Activated CD4-positive, alpha-beta memory T cell treated with anti-CD3 and anti-CD28 coated beads, Interleukin-2, amount 10 ng/mL, durations not matched to agents 7 days and 5 days (primary cell): ENCODE measurements at regions of chr9 and their contacts with region 1.

Region 1: GRCh38 chr9:37422289-37423104 is at the start of gene GRHPR:
- DNase-seq: peak; percentile 88
- H3K4me3 Mint-ChIP-seq: peak within 1 kb of the TSS; percentile 85
- H3K27ac Mint-ChIP-seq: peak within 1 kb of the TSS; percentile 72
- H3K4me1 Mint-ChIP-seq: peaks cover 25% of the 10 kb centered on the region
- H3K27me3 Mint-ChIP-seq: no peaks in the 10 kb centered on the region
- total RNA-seq, gene GRHPR: 51.2 to 51.5 TPM

Region 2: GRCh38 chr9:37465249-37466036 is 42.9 kb after region 1 on chr9 and contains the start of gene ZBTB5:
- CTCF ChIA-PET with region 1: no interaction called
- POLR2A ChIA-PET with region 1: interaction called, 12 read pairs
- DNase-seq: peak; percentile 99
- H3K4me3 Mint-ChIP-seq: peak within 1 kb of the TSS; percentile 83
- H3K27ac Mint-ChIP-seq: peak within 1 kb of the TSS; percentile 89
- H3K4me1 Mint-ChIP-seq: peaks cover 34% of the 10 kb centered on the region
- H3K27me3 Mint-ChIP-seq: no peaks in the 10 kb centered on the region
- total RNA-seq, gene ZBTB5: 10.5 to 10.6 TPM

Region 3: GRCh38 chr9:37913480-37914153 is 491.1 kb after region 1 on chr9:
- CTCF ChIA-PET with region 1: no interaction called
- POLR2A ChIA-PET with region 1: no interaction called
- DNase-seq: peak; percentile 83
- H3K4me3 Mint-ChIP-seq: no peak overlapping the region
- H3K27ac Mint-ChIP-seq: no peak overlapping the region
- H3K4me1 Mint-ChIP-seq: peaks cover 7% of the 10 kb centered on the region
- H3K27me3 Mint-ChIP-seq: no peaks in the 10 kb centered on the region